Cardiac septum (tissue), 1 donor: ENCODE measurements at regions of chr11 and their contacts with region 1.

Region 1: DNA sequence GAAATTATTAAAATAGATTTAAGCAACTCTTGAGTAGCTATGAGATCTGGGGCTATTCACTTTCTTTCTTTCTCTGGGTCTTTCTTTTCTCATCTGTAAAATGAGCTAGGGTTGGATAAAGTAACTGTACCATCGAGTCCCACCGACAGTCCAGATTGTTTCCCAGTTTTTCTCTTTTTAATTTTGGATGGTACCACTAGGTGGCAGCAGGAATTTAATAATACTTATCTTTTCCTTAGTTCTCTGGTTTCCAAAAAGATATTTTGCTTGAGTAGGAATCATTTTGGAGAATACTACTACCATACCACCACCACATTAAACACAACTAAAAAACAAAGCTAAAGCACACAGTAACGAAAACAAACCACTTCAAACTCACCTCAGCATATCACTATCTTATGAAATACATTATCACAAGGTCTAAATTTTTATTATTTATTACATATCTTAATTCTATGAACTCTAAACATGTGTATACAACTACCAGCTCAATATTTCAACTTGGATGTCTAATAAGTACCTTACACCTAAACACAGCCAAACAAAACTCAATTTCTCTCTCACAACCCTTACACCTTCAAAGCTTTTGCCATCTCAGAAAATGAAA is 584.0 kb downstream of the KCNA4 start:
- DNase-seq: no peak

Region 2: DNA sequence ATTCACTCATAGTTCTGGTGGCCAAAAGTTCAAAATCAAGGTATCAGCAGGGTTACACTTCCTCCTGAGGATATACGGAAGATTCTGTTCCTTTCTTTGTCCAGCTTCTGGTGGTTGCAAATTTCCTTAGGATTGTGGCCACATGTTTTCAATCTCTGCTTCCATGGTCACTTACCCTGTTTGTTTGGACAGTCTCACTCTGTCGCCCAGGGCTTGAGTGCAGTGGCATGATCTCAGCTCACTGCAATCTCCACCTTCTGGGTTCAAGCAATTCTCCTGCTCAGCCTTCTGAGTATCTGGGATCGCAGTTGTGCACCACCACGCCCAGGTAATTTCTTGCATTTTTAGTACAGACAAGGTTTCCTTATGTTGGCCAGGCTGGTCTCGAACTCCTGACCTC is 49.7 kb after region 1 on chr11:
- intact Hi-C with region 1: no loop called
- DNase-seq: no peak

Region 3: GRCh38 chr11:30046582-30046952 is 613.7 kb after region 1 on chr11:
- intact Hi-C with region 1: loop called (anchors 10 kb)
- DNase-seq: no peak

Region 4: DNA sequence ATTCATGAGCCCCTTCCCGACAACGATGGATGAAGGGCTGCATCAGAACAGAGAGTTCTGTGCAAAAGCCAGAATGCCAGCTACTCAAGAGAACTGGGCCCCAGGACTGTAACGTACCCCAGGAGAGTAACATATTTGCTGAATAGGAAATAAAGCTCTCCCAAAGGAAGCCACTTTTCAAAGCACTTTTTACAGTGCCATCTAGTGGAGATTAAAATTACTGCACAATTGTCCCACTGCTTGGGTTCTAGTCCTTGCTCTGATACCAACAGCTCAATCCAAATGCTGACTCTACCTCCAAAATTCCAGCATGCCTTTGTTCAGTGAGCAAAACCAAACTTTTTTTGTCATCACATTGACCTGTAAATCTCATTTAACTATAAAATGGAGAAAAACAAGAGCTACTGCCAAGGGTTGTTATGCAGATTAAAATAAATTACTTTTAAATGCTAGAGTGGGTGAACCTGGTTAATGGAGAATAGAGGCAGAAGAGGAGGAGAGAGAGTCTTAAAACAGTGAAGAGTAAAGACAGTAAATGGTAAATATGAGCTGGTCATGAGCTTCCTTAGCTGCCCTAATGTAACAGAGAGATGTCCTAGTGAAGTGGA is 710.4 kb after region 1 on chr11:
- intact Hi-C with region 1: loop called (anchors 10 kb)
- DNase-seq: no peak

Region 5: DNA sequence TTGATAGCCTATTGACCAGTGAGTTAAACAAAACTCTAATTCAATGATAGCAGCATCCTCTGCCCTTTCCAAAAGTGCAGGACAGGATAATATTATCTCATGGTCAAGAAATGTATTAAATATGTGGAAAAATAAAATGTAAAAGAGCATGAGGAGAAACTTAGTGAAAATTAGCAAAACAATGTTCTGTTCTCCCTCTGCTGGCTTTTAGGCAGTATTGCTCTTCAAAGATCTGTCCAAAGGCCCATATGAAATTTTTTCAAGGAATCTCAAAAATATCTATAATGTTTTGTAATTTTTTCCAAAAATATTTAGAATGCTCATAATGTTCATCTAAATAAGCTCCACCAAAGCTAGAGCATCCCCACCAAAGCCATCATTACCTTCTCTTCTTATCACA is 881.8 kb after region 1 on chr11:
- intact Hi-C with region 1: loop called (anchors 10 kb)
- DNase-seq: no peak